Pancreas (tissue), 10 donors: ENCODE measurements at regions of chr1 and their contacts with region 1.

Region 1: GRCh38 chr1:229479660-229480399 is 28.3 kb downstream of the NUP133 start:
- DNase-seq: no peak
- ATAC-seq: no peak
- H3K4me3 ChIP-seq: no peak overlapping the region
- H3K27ac ChIP-seq: no peak overlapping the region
- H3K4me1 ChIP-seq: no peaks in the 10 kb centered on the region
- H3K27me3 ChIP-seq: no peaks in the 10 kb centered on the region
- CTCF ChIP-seq: no peak

Region 2: GRCh38 chr1:229268505-229268904 is 211.3 kb before region 1 on chr1:
- intact Hi-C with region 1: loop called in 2 of 3 experiments (anchors 5 to 10 kb)
- DNase-seq: no peak
- ATAC-seq: no peak
- H3K4me3 ChIP-seq: no peak overlapping the region
- H3K27ac ChIP-seq: no peak overlapping the region
- H3K4me1 ChIP-seq: peaks cover 11 to 28% (median 24%) of the 10 kb centered on the region in 3 donors
- H3K27me3 ChIP-seq: no peaks in the 10 kb centered on the region
- CTCF ChIP-seq: no peak